Stomach (tissue), 19 donors: ENCODE measurements at regions of chr2 and their contacts with region 1.

Region 1: GRCh38 chr2:48126162-48126561 is 219.9 kb upstream of the FBXO11 start:
- DNase-seq: peak in 1 of 2 donors; percentile 30
- H3K4me3 ChIP-seq: no peak overlapping the region
- H3K27ac ChIP-seq: no peak overlapping the region
- H3K4me1 ChIP-seq: no peaks in the 10 kb centered on the region
- H3K27me3 ChIP-seq: no peaks in the 10 kb centered on the region
- CTCF ChIP-seq: no peak
- EP300 ChIP-seq: no peak
- POLR2A ChIP-seq: no peak

Region 2: DNA sequence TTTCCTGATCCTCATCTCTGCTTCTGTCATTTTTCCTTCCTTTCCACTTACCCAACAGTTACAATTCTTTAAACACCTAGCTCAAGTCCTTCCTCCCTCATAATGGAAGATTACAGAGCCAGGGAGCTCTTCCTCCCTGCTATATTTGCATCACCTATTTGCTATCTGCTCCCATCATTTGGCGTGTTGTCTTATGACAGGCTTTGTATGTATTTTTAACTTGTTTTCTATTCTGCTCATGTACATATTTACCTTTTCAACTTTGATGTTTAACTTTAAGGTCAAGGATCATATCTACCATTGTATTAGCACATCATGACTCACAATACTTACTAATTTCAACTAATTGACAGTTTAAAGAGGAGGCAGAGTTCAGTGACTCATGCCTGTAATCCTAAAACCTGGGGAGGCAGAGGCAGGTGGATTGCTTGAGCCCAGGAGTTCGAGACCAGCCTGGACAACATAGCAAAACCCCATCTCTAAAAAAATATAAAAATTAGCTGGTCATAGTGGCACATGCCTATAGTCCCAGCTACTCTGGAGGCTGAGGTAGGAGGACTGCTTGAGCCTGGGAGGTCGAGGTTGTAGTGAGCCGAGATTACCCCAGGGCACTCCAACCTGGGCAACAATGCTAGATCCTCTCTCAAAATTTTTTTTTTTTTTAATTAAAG is 95.8 kb after region 1 on chr2:
- intact Hi-C with region 1: no loop called
- DNase-seq: no peak
- H3K4me3 ChIP-seq: no peak overlapping the region
- H3K27ac ChIP-seq: no peak overlapping the region
- H3K4me1 ChIP-seq: peaks cover 0 to 8% (median 4%) of the 10 kb centered on the region in 4 donors
- H3K27me3 ChIP-seq: no peaks in the 10 kb centered on the region
- CTCF ChIP-seq: no peak
- EP300 ChIP-seq: no peak
- POLR2A ChIP-seq: no peak

Region 3: DNA sequence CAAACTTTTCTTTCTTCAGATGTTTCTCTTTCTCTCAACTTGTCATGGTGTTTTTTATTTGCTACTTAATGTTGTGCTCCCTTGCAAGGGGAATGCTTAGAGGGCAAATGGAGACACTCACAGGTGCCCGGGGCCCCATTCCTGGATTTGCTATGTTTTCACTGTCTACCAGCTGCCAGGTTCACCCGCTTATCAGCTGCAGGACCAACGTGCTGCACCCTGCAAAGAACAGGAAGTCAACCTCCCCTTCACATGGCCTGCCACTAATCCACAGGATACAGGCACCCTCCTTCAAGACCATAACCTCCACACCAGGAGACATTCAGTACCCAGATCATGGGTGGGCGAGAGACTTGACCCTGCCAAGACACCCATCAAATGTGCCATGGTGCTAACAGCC is 166.2 kb after region 1 on chr2:
- intact Hi-C with region 1: loop called (anchors 10 kb)
- DNase-seq: no peak
- H3K4me3 ChIP-seq: no peak overlapping the region
- H3K27ac ChIP-seq: no peak overlapping the region
- H3K4me1 ChIP-seq: no peaks in the 10 kb centered on the region
- H3K27me3 ChIP-seq: no peaks in the 10 kb centered on the region
- CTCF ChIP-seq: no peak
- EP300 ChIP-seq: no peak
- POLR2A ChIP-seq: no peak